ENCODE measurements at regions of chr5 and their contacts with region 1.

Region 1: GRCh38 chr5:139755892-139756671 is 39.5 kb upstream of the PSD2 start:
- DNase-seq: peak; percentile 49
- ATAC-seq: peak; percentile 47
- H3K4me3 Mint-ChIP-seq: peak overlapping the region; percentile 52
- H3K27ac Mint-ChIP-seq: no peak overlapping the region
- H3K4me1 Mint-ChIP-seq: peaks cover 39% of the 10 kb centered on the region
- H3K27me3 Mint-ChIP-seq: peaks cover 26% of the 10 kb centered on the region
- CTCF ChIP-seq: no peak

Region 2: GRCh38 chr5:139443831-139444453 is 312.1 kb before region 1 on chr5:
- CTCF ChIA-PET with region 1: no interaction called
- POLR2A ChIA-PET with region 1: no interaction called
- intact Hi-C with region 1: no loop called
- DNase-seq: no peak
- ATAC-seq: peak; percentile 19
- H3K4me3 Mint-ChIP-seq: no peak overlapping the region
- H3K27ac Mint-ChIP-seq: peak overlapping the region; percentile 60
- H3K4me1 Mint-ChIP-seq: peaks cover 53% of the 10 kb centered on the region
- H3K27me3 Mint-ChIP-seq: no peaks in the 10 kb centered on the region
- CTCF ChIP-seq: no peak

Region 3: GRCh38 chr5:139698490-139699146 is 57.5 kb before region 1 on chr5:
- CTCF ChIA-PET with region 1: no interaction called
- POLR2A ChIA-PET with region 1: no interaction called
- intact Hi-C with region 1: no loop called
- DNase-seq: no peak
- ATAC-seq: no peak
- H3K4me3 Mint-ChIP-seq: no peak overlapping the region
- H3K27ac Mint-ChIP-seq: no peak overlapping the region
- H3K4me1 Mint-ChIP-seq: peaks cover 36% of the 10 kb centered on the region
- H3K27me3 Mint-ChIP-seq: peaks cover 7% of the 10 kb centered on the region
- CTCF ChIP-seq: no peak

Region 4: DNA sequence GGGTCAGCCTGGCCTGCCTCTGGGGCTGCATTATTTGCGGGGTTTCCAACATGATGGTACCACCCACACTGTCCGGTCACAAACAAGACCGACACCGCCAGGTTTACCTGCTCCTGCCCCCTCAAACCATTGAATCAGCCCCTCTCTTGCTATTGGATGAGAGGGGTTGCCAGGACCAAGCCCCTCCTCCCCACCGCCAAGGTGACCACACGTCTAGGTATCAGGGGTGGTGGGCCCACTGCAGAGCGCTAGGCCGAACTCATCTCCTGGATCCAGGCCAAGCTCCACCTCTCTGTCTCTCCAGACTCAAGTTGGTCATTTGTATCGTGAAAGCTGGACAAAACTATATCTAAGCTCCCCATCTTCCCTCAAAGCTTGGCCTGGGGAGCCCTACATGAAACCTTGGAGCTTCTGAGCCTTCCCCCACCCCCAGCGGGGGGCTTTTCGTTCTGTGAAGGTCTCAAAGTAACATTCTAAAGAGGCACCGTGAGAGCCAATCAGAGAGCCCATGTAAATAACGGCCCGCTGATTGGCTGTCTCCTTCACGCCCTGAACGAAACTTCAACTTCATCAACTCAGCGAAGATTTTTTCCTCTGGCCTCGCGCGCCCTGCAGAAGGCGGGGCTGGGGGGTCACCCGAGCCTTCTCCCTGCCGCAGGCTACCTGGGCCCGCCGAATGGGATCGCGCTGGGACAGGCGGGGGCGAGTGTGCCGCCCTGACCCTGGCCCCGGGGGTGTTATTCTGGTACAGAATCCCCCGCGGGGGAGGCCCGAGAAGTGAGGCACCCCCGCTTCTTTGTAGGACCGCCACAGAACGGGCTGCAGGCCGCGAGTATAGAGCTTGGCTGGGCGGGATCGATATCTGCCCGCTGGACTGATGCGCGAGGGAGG is 10.0 kb before region 1 on chr5:
- CTCF ChIA-PET with region 1: interaction called, 3 read pairs
- POLR2A ChIA-PET with region 1: interaction called, 15 read pairs
- intact Hi-C with region 1: no loop called
- DNase-seq: peak; percentile 79
- ATAC-seq: peak; percentile 22
- H3K4me3 Mint-ChIP-seq: peak overlapping the region; percentile 68
- H3K27ac Mint-ChIP-seq: peak overlapping the region; percentile 92
- H3K4me1 Mint-ChIP-seq: peaks cover 36% of the 10 kb centered on the region
- H3K27me3 Mint-ChIP-seq: peaks cover 8% of the 10 kb centered on the region
- CTCF ChIP-seq: no peak

Region 5: DNA sequence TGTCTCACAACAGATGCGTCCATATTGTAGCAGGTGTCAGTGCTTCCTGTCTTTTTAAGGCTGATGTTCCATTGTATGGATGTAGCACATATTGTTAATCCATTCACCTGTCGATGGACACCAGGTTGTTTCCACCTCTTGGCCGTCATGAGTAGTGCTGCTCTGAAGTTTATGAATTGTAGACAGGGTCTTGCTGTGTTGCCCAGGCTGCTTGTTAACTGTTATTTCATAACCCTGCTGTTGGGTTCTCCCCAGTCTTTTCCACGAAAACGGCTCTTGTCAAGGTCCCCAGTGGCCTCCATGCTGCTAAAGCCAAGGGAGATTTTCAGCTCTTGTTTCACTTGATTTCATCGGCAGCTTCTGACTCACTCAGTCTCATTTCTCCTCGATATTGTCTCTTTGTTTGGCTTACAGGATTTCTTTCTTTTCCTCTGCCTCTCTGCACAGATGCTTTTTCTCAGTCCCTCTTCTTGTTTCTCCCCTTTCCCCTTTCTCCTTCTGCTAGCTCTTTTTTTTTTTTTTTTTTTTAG is 27.4 kb after region 1 on chr5:
- CTCF ChIA-PET with region 1: no interaction called
- POLR2A ChIA-PET with region 1: no interaction called
- intact Hi-C with region 1: no loop called
- DNase-seq: no peak
- ATAC-seq: no peak
- H3K4me3 Mint-ChIP-seq: no peak overlapping the region
- H3K27ac Mint-ChIP-seq: no peak overlapping the region
- H3K4me1 Mint-ChIP-seq: no peaks in the 10 kb centered on the region
- H3K27me3 Mint-ChIP-seq: peaks cover 9% of the 10 kb centered on the region
- CTCF ChIP-seq: no peak

Region 6: DNA sequence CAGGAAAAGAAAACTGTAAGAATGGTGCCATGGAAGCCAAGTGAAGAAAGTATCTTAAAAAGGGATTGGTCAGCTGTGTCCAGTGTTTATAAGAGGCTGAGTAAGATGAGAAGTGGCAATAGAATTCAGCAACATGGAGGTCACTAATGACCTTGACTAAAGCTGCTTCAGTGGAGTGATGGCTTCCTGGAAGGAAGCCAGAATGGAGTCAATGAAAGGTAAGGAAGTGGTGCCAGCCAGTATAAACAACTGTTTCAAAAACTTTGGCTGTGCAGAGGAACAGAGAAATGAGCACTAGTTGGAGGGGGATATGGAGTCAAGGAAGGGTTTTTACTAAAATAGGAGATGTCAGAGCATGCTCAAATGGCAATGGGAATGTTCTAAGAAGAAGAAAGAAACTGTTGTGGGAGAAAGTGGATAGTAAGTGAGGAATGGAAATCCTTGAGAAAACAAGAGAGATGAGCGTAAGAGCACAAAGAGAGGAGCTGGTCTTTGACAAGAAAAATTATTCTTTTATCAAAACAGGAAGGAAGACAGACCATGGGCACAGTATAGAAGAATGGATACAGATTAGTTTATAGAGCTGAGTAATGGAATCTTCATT is 298.1 kb after region 1 on chr5:
- CTCF ChIA-PET with region 1: no interaction called
- POLR2A ChIA-PET with region 1: no interaction called
- intact Hi-C with region 1: no loop called
- DNase-seq: no peak
- ATAC-seq: no peak
- H3K4me3 Mint-ChIP-seq: no peak overlapping the region
- H3K27ac Mint-ChIP-seq: no peak overlapping the region
- H3K4me1 Mint-ChIP-seq: no peaks in the 10 kb centered on the region
- H3K27me3 Mint-ChIP-seq: peaks cover 8% of the 10 kb centered on the region
- CTCF ChIP-seq: no peak

Measured in activated CD8-positive, alpha-beta T cell treated with anti-CD3 and anti-CD28 coated beads for 36 hours (primary cell).